Psoas muscle (tissue), 8 donors: ENCODE measurements at regions of chr12 and their contacts with region 1.

Region 1: GRCh38 chr12:46209914-46210872 is 58.6 kb downstream of the SLC38A1 start:
- DNase-seq: peak; percentile 37 to 66
- ATAC-seq: peak; percentile 85 to 99 (median 96)
- H3K4me3 ChIP-seq: no peak overlapping the region
- H3K27ac ChIP-seq: peak overlapping the region; percentile 67
- H3K4me1 ChIP-seq: peaks cover 11% of the 10 kb centered on the region
- H3K27me3 ChIP-seq: no peaks in the 10 kb centered on the region
- CTCF ChIP-seq: no peak

Region 2: DNA sequence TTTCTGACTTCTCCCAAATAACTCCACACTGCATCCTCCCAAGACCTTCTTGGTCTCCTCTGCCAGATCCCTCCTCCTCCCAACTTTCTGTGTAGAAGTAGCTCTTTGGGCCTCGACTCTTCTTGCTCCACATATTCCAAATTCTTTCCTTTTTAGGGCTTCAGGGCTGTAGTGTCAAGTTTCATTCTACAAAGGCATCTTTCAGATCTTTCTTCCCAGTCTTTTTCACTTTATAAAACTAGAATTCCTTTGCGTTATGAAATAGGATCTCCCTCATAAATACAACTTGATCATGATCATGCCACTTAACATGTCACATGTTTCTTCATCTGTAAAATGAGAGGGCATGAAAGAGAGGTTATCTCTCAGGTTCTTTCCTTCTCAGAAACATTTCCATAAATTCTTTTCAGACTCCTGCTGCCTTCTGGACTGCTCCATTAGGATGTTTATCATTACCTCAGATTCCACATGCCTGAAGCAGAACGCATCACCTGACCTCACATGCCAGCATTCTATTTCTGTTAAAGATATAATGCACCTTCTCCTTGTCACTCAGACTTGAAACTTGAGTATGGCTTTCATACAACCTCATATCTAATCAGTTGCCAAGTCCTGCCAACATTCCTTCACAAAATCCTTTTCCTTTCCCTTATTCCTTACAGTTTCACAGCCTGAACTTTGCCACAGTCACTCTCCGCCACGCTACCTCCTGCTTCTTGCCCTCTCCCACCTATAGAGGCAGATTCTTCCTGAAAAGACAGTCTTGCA is 50.1 kb after region 1 on chr12:
- intact Hi-C with region 1: loop called in 1 of 2 experiments (anchors 5 kb)
- DNase-seq: no peak
- ATAC-seq: peak in 3 of 4 donors; percentile 35 to 51 (median 38)
- H3K4me3 ChIP-seq: no peak overlapping the region
- H3K27ac ChIP-seq: peak overlapping the region; percentile 13
- H3K4me1 ChIP-seq: peaks cover 23% of the 10 kb centered on the region
- H3K27me3 ChIP-seq: no peaks in the 10 kb centered on the region
- CTCF ChIP-seq: no peak

Region 3: GRCh38 chr12:46303039-46303666 is 93.0 kb after region 1 on chr12:
- intact Hi-C with region 1: no loop called
- DNase-seq: no peak
- ATAC-seq: peak in 3 of 4 donors; percentile 35 to 72 (median 66)
- H3K4me3 ChIP-seq: no peak overlapping the region
- H3K27ac ChIP-seq: no peak overlapping the region
- H3K4me1 ChIP-seq: no peaks in the 10 kb centered on the region
- H3K27me3 ChIP-seq: no peaks in the 10 kb centered on the region
- CTCF ChIP-seq: peak; percentile 52